ENCODE measurements at regions of chr14 and their contacts with region 1.

Region 1: DNA sequence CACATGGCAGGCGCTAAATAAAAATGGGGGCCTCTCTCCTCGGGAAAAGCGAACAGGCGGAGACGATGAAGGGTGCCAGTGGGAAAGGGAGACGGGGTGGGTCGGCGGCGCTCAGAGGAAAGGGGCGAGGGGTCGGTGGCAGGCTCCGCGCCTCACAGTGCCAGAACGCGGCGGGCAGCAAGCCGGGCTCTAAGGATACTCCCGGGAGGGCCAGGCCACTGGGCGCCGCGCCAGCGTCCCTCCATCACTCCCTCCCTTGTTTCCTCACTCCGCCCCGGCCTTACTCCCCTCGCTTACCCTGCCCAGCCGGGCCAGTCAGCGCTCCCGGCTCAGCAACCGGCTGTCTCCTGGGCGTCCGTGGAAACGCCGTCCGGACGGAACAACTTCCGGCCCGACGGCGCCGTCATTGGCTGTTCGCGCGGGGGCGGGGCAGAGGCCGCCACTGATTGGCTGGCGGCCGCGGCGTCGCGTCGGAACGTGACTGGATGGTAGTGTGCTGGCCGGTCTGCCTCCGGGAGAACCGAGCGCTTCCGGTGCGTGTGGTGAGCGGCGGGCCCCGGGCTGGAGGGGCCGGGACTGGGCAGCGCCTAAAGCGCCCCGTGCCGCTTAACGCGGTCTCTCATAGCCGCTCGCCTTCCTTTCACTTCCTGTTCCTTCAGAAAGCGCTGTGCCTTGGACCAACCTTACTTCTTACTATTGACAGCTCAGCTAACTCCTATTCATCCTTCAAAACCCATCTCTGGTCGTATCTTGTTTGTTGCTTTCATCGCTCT is 53.0 kb downstream of the SLC25A47 start:
- DNase-seq: peak; percentile 95
- H3K4me3 ChIP-seq: peak within 1 kb of the TSS; percentile 91
- H3K27ac ChIP-seq: peak within 1 kb of the TSS; percentile 51
- H3K4me1 ChIP-seq: peaks cover 30% of the 10 kb centered on the region
- CTCF ChIP-seq: no peak

Region 2: GRCh38 chr14:99971087-99971940 is 404.8 kb before region 1 on chr14:
- CTCF ChIA-PET with region 1: no interaction called
- POLR2A ChIA-PET with region 1: no interaction called
- intact Hi-C with region 1: loop called (anchors 10 kb)
- DNase-seq: peak; percentile 89
- H3K4me3 ChIP-seq: peak overlapping the region; percentile 76
- H3K27ac ChIP-seq: peak overlapping the region; percentile 29
- H3K4me1 ChIP-seq: peaks cover 15% of the 10 kb centered on the region
- CTCF ChIP-seq: no peak

Region 3: DNA sequence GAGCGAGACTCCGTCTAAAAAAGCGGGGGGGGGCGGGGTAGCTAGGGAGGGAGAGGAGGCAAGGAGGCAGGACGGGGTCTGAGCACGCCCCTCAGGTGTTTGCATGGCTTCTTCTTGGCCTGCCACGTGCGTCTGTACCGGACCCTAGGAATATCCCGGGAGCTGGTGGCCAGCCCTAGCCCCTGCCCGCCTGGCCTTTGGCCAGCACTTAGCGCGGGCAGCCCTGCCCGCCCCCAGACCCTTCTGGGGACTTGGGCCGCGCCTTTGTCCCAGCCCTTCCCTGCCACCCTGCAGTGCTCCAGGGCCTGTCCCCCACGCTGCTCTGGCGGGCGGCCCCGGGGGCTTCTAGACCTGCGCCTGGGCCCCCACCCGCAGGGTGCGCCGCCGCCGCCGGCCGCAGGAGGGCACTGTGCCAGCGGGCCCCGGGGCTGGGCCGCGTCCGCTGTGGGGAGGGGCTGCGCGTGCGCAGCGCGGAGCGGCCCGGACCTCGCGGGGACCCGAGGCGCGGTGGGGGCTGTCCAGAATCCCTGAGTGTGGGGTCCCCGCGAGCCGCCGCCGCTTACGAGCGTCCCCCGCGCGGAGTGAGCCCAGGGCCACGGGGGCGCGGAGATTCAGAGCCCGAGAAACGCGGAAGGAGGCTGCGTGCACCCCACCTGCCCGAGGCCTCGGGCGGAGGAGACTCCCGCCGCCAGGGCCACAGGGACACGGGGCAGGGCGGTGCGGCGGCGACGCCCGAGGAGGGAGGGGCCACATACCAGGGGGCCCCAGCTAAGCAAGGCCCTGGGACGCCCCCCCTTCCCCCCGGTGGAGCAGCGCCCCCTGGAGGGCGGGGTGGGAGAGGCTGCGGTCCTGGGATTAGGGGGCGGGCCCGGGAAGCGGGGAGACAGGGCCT is 90.9 kb before region 1 on chr14:
- CTCF ChIA-PET with region 1: no interaction called
- POLR2A ChIA-PET with region 1: no interaction called
- intact Hi-C with region 1: loop called (anchors 1 kb)
- DNase-seq: peak; percentile 82
- H3K4me3 ChIP-seq: peak overlapping the region; percentile 76
- H3K27ac ChIP-seq: peak overlapping the region; percentile 47
- H3K4me1 ChIP-seq: peaks cover 17% of the 10 kb centered on the region
- CTCF ChIP-seq: peak; percentile 84

Region 4: GRCh38 chr14:100306420-100307219 is 69.5 kb before region 1 on chr14 and contains the start of gene SLC25A29:
- CTCF ChIA-PET with region 1: no interaction called
- POLR2A ChIA-PET with region 1: no interaction called
- intact Hi-C with region 1: loop called (anchors 2 kb)
- DNase-seq: peak; percentile 88
- H3K4me3 ChIP-seq: peak within 1 kb of the TSS; percentile 75
- H3K27ac ChIP-seq: no peak within 1 kb of the TSS
- H3K4me1 ChIP-seq: peaks cover 7% of the 10 kb centered on the region
- CTCF ChIP-seq: no peak
- total RNA-seq, gene SLC25A29: 34.8 and 37.4 TPM in 2 replicates

Measured in OCI-LY7 (cell line).